BJ (cell line): ENCODE measurements at regions of chr12 and their contacts with region 1.

Region 1: DNA sequence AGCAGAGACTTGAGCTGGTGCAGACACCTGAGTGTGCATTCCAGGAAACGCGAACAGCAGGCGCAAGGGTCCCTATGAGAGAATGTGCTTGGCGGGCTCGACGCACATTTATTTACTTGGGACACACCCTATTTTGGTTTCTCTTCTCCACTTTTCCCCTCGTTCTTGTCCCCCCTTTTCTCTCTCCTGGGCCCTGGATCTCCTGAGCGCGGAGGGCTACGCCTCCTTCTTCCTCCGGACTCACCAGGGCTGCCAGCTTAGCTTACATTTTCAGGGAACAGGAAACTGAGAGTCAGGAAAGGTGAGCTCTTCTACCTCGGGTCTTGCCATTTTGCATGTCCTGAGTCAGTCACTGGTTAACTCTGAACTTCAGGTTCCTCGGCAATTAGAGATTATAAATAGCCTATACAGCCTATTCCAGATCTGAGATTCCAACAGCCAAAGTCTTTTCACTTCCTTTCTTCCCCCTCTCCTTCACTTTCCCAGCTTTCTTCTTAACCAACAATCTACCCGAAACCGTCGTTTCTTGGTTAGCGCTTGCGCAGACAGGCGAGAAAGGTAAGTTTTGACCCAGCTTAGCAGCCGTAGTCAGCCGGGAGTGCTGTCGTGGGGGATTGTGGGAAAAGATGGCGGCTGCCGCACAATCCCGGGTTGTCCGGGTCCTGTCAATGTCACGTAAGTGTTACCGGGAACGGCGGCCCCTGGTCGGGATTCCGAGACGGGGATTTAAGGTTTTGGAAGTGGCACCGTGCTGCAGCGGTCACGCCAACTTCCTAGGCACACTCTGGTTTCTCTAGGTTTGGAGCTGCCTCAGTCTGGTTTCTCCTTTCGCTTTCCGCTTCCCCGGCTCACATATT is at the starts of genes AKAP3 and NDUFA9:
- DNase-seq: peak; percentile 47
- H3K4me3 ChIP-seq: peak within 1 kb of the TSS; percentile 88
- H3K27me3 ChIP-seq: no peaks in the 10 kb centered on the region
- CTCF ChIP-seq: no peak
- polyA plus RNA-seq, gene AKAP3: 0.98 and 1.1 TPM in 2 replicates
- polyA plus RNA-seq, gene NDUFA9: 76.1 and 111 TPM in 2 replicates

Region 2: DNA sequence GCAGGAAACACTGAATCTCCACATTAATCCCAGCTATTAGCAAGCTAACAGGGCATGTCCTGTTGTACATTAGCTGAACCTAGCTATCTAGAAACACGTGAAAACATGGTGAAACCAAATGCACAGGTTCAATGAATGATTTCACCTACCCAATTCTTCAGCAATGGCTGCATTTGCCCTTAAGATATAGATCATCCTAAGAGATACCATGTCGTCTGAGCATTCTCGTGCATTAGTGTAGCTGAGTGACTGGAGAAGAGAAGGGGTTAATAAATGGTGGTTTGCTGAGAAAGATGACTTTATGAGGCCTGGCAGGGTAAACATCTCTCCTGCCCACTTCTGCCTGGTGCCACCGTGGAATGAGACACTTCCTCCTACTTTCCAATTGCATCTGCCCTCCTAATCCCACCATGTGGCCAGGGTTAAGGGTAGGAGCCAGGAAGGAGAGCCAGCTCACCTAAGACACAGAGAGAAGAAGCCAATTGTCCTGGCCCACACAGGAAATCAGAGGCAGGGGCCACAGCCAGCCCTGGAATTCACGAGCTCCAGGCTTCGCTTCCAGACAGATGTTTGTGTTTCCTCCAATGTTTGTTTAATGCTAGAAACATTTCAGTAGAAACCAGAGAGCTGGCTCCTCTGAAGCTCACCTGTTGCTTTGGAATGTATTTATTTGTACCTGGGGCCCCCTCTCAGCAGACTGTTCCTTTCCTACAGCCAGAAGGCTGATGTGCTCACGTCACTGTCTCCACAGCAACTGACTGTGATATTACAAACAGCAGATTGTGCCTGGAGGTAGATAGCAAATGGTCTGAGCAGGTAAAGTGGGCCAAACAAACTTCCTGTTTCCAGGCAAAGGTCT is 649.5 kb before region 1 on chr12:
- CTCF ChIA-PET with region 1: no interaction called
- POLR2A ChIA-PET with region 1: no interaction called
- DNase-seq: no peak
- H3K4me3 ChIP-seq: no peak overlapping the region
- H3K27me3 ChIP-seq: peaks cover 6% of the 10 kb centered on the region
- CTCF ChIP-seq: no peak

Region 3: GRCh38 chr12:4441355-4442335 is 207.1 kb before region 1 on chr12:
- CTCF ChIA-PET with region 1: no interaction called
- POLR2A ChIA-PET with region 1: no interaction called
- DNase-seq: no peak
- H3K4me3 ChIP-seq: no peak overlapping the region
- H3K27me3 ChIP-seq: peaks cover 2% of the 10 kb centered on the region
- CTCF ChIP-seq: no peak

Region 4: DNA sequence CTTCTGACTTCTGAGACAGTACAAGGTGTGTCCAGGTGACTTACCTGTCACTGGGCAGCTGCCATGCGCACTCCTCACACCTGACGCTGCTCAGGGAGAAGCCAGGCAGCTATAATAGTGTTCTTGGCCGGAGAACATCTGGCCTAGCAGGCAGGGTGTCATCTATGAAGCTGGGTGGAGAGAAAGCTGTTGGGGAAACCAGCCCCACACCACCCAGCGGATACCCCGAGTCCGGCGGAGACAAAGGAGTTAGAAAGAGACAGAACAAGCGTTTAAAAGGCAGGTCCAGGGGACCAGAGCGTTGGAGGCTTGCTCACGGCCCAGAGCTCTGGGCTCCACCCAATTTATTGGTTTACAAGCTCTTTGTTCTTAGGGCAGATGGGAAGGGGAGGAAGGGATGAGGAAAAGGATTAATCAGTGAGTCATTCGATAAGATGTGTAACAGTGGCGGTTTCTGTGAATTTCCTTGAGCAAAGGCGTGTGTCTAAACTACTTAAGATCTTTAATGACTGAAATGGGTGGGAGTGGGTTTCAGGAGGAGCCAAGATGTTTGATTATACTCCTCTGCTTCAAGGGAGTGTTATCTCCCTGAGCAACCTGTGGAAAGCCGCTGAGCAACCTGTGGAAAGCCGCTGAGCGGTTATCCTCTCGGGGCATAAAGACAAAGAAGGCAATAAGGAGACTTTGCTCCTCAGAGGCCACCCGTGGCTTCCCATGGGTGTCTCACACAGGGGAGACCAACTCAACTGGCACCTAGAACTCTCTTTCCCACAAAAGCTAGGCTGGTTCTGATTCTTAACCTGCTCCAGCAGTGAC is 71.3 kb after region 1 on chr12 and contains the start of gene GALNT8:
- CTCF ChIA-PET with region 1: no interaction called
- POLR2A ChIA-PET with region 1: interaction called, 10 read pairs
- DNase-seq: no peak
- H3K4me3 ChIP-seq: no peak within 1 kb of the TSS
- H3K27me3 ChIP-seq: peaks cover 10% of the 10 kb centered on the region
- CTCF ChIP-seq: no peak
- polyA plus RNA-seq, gene GALNT8: 0.02 TPM in 1 of 2 replicates, not detected in the other

Region 5: DNA sequence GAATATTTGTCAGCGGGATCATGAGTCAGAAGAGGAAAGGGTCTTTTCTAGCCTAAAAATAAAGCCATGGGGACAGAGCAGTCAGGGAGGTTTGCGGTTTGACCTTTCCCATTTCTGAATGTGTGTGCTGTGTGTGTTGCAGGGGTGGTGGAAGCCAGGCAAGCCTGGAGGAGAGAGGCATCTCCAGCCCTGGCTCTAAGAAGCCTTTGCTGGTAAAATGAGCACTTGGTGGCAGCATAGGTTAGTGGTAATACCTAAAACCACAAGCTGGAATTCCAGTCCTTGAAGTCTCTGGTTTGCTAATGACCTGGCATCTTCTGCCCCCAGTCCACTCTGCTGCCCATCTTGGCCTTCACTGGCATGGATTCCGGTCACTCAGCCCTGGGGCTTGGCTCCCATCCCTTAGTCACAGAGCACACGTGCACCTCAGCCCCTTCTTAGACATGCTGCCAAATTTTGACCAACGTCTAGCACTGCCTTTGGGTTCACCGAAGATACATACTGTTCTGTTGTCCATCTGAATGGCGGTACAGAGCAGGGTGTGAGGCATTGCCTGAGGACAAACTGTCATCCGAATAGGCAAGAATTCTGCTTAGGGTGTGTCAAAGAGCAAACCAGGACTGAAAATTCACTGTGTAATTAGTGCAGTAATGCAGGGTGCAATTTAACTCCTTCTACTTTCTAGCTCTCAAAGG is 447.7 kb after region 1 on chr12:
- CTCF ChIA-PET with region 1: no interaction called
- POLR2A ChIA-PET with region 1: no interaction called
- DNase-seq: peak; percentile 62
- H3K4me3 ChIP-seq: no peak overlapping the region
- H3K27me3 ChIP-seq: no peaks in the 10 kb centered on the region
- CTCF ChIP-seq: peak; percentile 34; the same call in 1 of the 2 replicates